Breast epithelium (tissue), 4 donors: ENCODE measurements at regions of chr11 and their contacts with region 1.

Region 1: DNA sequence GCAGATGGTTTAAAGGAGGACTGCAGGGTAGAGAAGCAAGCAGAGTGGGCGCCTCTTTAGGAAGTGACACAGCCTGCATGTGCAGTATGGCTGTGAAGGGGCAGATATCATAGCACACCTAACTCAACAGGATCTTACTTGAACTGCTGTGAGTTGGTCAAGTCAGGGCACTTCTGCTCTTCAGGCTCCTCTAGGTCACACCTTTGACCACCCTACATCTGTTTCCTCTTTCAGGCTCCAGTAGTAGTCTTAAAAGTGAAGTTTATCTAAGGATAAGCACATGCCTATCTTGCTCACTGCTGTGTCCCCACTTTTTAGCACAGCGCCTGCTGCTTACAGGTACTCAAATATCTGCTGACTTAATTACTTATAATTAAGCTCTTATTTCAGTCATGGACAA is 6.5 kb downstream of the MRPL16 start:
- DNase-seq: no peak
- H3K4me3 ChIP-seq: no peak overlapping the region
- H3K27ac ChIP-seq: no peak overlapping the region
- H3K4me1 ChIP-seq: no peaks in the 10 kb centered on the region
- H3K27me3 ChIP-seq: no peaks in the 10 kb centered on the region
- CTCF ChIP-seq: no peak
- POLR2A ChIP-seq: no peak

Region 2: GRCh38 chr11:59753650-59754493 is 50.2 kb before region 1 on chr11:
- intact Hi-C with region 1: loop called (anchors 2 kb)
- DNase-seq: peak; percentile 75 to 83
- H3K4me3 ChIP-seq: peak overlapping the region; percentile 67 to 91 (median 82)
- H3K27ac ChIP-seq: peak overlapping the region; percentile 93 to 98
- H3K4me1 ChIP-seq: peaks cover 6 to 8% of the 10 kb centered on the region in 2 donors
- H3K27me3 ChIP-seq: no peaks in the 10 kb centered on the region
- CTCF ChIP-seq: peak; percentile 89 to 94 (median 90)
- POLR2A ChIP-seq: no peak

Region 3: GRCh38 chr11:59787816-59788215 is 16.2 kb before region 1 on chr11:
- intact Hi-C with region 1: loop called (anchors 1 kb)
- DNase-seq: no peak
- H3K4me3 ChIP-seq: no peak overlapping the region
- H3K27ac ChIP-seq: peak overlapping the region in 1 of 2 donors; percentile 73
- H3K4me1 ChIP-seq: peaks cover 0 to 15% of the 10 kb centered on the region in 2 donors
- H3K27me3 ChIP-seq: no peaks in the 10 kb centered on the region
- CTCF ChIP-seq: no peak
- POLR2A ChIP-seq: no peak